ENCODE measurements at regions of chr5 and their contacts with region 1.

Region 1: DNA sequence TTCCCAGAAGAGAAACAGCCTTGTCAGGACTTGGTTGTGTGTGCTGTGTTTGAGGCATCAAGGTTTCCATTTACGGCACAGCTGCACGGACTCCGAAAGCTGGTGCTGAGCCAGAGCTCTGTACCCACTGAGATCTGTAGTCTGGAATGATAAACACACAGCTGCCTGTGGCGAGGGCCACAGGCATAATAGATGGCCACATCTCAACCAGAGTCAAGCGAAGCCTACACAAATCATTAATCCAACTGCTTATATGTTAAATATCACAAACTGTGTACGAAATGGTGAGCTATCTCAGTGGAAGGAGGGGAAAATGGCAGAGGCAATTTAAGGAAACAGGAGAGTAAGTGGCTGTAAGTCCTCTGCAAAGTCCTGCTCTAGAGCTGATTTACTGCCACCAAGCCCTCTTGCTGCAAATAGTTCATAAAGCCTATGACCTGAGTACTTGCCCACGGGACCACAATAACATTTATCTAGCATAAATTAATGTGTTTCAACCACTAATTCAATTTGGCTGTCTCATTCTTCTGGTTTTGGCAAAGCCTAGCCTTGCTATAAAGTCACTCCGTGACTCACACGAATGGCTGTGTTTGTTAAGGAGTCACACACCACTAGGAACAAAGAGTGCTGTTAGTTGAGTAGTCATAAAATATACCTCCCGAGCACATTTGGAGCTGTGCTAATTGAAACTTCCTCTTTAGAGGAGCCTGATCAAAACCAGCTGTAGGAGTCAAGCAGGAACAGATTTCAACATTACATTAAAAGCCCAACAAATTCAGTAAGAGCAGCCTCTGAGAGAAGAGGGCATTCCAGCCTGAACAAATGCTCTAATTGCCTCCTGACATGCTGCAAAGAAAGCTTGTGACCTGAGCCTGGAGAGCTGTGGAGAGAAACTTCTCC is 738.6 kb upstream of the ZNF608 start:
- DNase-seq: no peak
- H3K4me3 ChIP-seq: peak overlapping the region in 3 of 4 donors; percentile 3 to 38 (median 12)
- H3K27ac ChIP-seq: peak overlapping the region; percentile 84 to 91 (median 90)
- H3K4me1 ChIP-seq: peaks cover 19 to 68% (median 31%) of the 10 kb centered on the region in 3 donors
- H3K27me3 ChIP-seq: no peaks in the 10 kb centered on the region
- CTCF ChIP-seq: peak in 1 of 6 experiments; percentile 5
- POLR2A ChIP-seq: no peak

Region 2: GRCh38 chr5:124748687-124749594 is 736.1 kb before region 1 on chr5:
- intact Hi-C with region 1: loop called (anchors 10 kb)
- DNase-seq: peak; percentile 31
- H3K4me3 ChIP-seq: peak overlapping the region; percentile 37 to 78 (median 66)
- H3K27ac ChIP-seq: peak overlapping the region; percentile 80 to 96 (median 94)
- H3K4me1 ChIP-seq: peaks cover 0 to 41% (median 4%) of the 10 kb centered on the region in 3 donors
- H3K27me3 ChIP-seq: no peaks in the 10 kb centered on the region
- CTCF ChIP-seq: no peak
- POLR2A ChIP-seq: peak in 1 of 4 donors; percentile 61